ENCODE measurements at regions of chr5 and their contacts with region 1.

Region 1: GRCh38 chr5:138503487-138504270 is 38.4 kb downstream of the EGR1 start:
- DNase-seq: peak in 1 of 2 donors; percentile 47
- ATAC-seq: peak; percentile 66 to 88 (median 78)
- H3K4me3 ChIP-seq: no peak overlapping the region
- H3K27ac ChIP-seq: peak overlapping the region in 6 of 10 donors; percentile 32 to 58 (median 48)
- H3K4me1 ChIP-seq: peaks cover 0 to 28% (median 13%) of the 10 kb centered on the region in 9 donors
- H3K27me3 ChIP-seq: no peaks in the 10 kb centered on the region
- CTCF ChIP-seq: peak; percentile 54 to 82 (median 76)

Region 2: GRCh38 chr5:138372225-138372624 is 131.5 kb before region 1 on chr5:
- intact Hi-C with region 1: no loop called
- DNase-seq: no peak
- ATAC-seq: no peak
- H3K4me3 ChIP-seq: no peak overlapping the region
- H3K27ac ChIP-seq: no peak overlapping the region
- H3K4me1 ChIP-seq: peaks cover 5 to 59% (median 52%) of the 10 kb centered on the region in 9 donors
- H3K27me3 ChIP-seq: no peaks in the 10 kb centered on the region
- CTCF ChIP-seq: no peak

Region 3: DNA sequence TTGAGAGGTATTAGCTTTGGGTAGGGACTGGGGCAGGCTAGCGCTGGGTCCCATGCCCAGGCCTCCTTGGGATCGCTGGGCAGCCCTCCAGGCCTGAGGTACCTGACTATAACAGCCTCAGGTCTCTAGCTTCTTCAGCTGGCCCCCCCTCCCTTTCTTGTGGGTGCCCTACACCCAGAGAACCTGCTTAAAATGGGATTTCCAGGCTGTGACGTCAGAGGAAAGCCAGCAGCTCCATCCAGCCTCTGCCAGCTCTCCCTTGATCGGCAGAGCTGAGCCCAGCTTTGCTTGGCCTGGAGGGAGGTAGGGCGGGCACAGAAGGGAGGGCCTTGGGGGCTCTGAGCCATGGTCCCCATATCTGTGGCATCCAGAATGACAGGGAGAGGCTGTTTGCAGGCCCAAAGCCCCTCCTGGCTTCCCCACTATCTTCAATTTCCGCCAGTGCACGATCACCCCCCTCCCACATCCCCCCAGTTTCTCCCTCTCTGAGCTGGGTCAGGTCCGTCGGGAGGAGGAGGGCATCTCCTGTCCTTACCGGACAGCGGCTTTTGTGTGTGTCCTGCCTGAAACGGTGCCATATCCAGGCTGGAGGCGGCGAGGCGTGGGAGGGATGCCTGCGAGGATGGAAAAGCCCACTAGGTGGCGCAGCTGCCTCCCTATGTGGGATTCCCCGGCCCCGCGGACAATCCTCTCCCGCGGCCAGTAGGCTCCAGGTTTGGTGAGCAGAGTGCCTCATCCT is 54.0 kb before region 1 on chr5:
- intact Hi-C with region 1: loop called in 8 of 10 experiments (anchors 1 to 2 kb)
- DNase-seq: peak; percentile 90 to 91
- ATAC-seq: peak; percentile 86 to 96 (median 94)
- H3K4me3 ChIP-seq: peak overlapping the region in 2 of 10 donors; percentile 0 to 8
- H3K27ac ChIP-seq: no peak overlapping the region
- H3K4me1 ChIP-seq: peaks cover 0 to 12% (median 9%) of the 10 kb centered on the region in 9 donors
- H3K27me3 ChIP-seq: no peaks in the 10 kb centered on the region
- CTCF ChIP-seq: peak; percentile 94 to 99 (median 96)

Region 4: GRCh38 chr5:138464008-138464387 is 39.7 kb before region 1 on chr5:
- intact Hi-C with region 1: loop called in 5 of 10 experiments (anchors 1 to 5 kb)
- DNase-seq: peak; percentile 95 to 98
- ATAC-seq: peak; percentile 72 to 89 (median 86)
- H3K4me3 ChIP-seq: peak overlapping the region; percentile 57 to 98 (median 76)
- H3K27ac ChIP-seq: peak overlapping the region; percentile 93 to 99 (median 96)
- H3K4me1 ChIP-seq: peaks cover 2 to 70% (median 67%) of the 10 kb centered on the region in 9 donors
- H3K27me3 ChIP-seq: no peaks in the 10 kb centered on the region
- CTCF ChIP-seq: peak; percentile 84 to 98 (median 94)

Region 5: DNA sequence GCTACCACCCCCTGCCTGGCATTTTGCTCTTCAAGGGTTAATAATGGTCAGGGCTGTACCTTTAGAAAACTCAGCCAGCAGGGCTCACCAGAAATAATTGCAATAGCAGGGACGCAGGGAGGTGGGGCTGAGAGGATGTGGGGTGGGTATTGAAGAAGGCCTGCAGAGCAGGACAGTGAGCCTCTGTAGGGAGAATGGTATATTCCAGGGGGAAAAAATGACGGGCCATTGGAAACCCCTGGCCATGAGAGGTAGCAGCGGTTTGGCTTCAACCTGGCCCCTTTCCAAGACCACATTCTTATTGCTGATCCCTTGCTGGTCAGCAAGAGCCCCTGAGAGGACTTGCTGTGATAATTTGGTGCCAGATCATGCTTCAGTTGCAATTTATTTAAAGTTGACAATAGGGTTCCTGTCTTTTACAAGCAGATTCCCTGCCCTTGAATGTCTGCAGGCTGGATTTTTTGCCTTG is 212.8 kb after region 1 on chr5:
- intact Hi-C with region 1: no loop called
- DNase-seq: no peak
- ATAC-seq: peak in 4 of 8 donors; percentile 16 to 50 (median 36)
- H3K4me3 ChIP-seq: no peak overlapping the region
- H3K27ac ChIP-seq: no peak overlapping the region
- H3K4me1 ChIP-seq: peaks cover 0 to 12% (median 0%) of the 10 kb centered on the region in 9 donors
- H3K27me3 ChIP-seq: no peaks in the 10 kb centered on the region
- CTCF ChIP-seq: no peak

Measured in heart right ventricle (tissue), 16 donors.